Right ventricle myocardium inferior (tissue), 1 donor: ENCODE measurements at regions of chr16 and their contacts with region 1.

Region 1: GRCh38 chr16:58198022-58198683 is at the start of gene CSNK2A2:
- DNase-seq: peak; percentile 81
- ATAC-seq: peak; percentile 92
- total RNA-seq, gene CSNK2A2: 29.7 TPM

Region 2: GRCh38 chr16:58025351-58026138 is 172.6 kb before region 1 on chr16 and contains the start of gene MMP15:
- intact Hi-C with region 1: loop called (anchors 5 kb)
- DNase-seq: peak; percentile 87
- ATAC-seq: peak; percentile 69
- total RNA-seq, gene MMP15: 70.3 TPM

Region 3: GRCh38 chr16:58129097-58129936 is 68.8 kb before region 1 on chr16 and contains the start of gene CFAP20:
- intact Hi-C with region 1: loop called (anchors 5 kb)
- DNase-seq: peak; percentile 99
- ATAC-seq: peak; percentile 97
- total RNA-seq, gene CFAP20: 34.8 TPM

Region 4: DNA sequence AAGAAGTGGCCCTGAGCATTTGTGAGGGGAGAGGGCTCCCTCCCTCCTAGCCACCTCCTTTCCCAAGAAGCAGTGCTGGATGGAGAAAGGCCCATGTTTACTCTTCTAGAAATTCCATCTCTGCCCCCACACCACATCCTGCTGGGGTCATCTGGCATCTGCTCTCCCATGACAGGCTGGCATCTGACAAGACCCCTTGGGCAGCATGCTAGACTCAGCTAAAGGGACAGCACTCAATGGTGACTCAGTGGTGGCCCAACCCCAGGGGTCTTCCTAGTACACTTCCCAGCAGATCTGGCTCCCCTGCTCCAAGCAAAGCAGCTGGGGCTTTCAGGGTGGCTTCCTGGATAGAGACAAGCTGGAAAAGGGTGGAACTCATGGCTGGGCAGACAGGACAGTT is 472.0 kb after region 1 on chr16:
- intact Hi-C with region 1: no loop called
- DNase-seq: no peak
- ATAC-seq: no peak